GM13977 (cell line): ENCODE measurements at regions of chr2 and their contacts with region 1.

Region 1: GRCh38 chr2:64330281-64331113 is 123.5 kb upstream of the LGALSL start:
- DNase-seq: peak; percentile 23
- CTCF ChIP-seq: peak; percentile 90

Region 2: DNA sequence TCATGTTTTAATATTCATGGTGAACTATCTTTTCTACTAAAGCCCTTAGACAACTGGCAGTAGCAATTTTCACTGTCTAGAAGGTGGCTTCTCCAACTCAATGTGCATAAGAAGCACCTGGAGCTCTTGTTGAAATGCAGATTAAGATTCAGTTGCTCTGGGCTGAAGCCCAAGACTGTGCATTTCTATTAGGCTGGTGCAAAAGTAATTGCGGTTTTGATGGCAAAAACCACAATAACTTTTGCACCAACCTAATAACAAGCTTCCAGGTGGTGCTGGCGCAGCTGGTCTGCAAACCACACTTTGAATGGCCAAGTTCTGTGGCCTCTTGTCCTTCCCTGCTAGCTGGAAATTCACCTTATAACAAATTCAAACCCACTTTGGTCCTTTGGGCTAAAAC is 284.6 kb before region 1 on chr2:
- in situ Hi-C with region 1: loop called (anchors 5 kb)
- DNase-seq: no peak
- CTCF ChIP-seq: no peak

Region 3: GRCh38 chr2:64488050-64488974 is 157.8 kb after region 1 on chr2:
- in situ Hi-C with region 1: loop called (anchors 10 kb)
- DNase-seq: peak; percentile 75
- CTCF ChIP-seq: peak; percentile 87

Region 4: DNA sequence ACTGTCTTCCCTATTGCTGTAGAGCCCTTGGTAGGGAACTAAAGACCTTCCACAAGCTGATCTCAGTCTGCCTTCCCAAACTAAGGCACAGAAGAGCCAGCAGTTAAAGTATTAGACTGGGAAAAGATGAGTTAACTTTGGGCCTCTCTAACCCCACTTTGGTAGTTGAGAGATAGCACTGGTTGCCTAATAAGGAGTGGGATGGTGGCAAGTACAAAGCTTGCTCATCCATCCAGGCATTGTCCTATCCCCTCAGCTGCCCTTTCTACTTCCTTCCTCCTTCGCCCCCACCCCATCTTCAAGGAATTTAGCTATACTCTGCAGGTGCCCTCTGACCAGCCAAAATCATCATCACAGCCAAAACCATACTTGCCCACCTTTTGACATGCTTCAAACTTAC is 171.4 kb after region 1 on chr2:
- in situ Hi-C with region 1: no loop called
- DNase-seq: no peak
- CTCF ChIP-seq: no peak

Region 5: GRCh38 chr2:64873472-64873924 is 543.0 kb after region 1 on chr2:
- in situ Hi-C with region 1: loop called (anchors 25 kb)
- DNase-seq: peak; percentile 74
- CTCF ChIP-seq: peak; percentile 96

Region 6: DNA sequence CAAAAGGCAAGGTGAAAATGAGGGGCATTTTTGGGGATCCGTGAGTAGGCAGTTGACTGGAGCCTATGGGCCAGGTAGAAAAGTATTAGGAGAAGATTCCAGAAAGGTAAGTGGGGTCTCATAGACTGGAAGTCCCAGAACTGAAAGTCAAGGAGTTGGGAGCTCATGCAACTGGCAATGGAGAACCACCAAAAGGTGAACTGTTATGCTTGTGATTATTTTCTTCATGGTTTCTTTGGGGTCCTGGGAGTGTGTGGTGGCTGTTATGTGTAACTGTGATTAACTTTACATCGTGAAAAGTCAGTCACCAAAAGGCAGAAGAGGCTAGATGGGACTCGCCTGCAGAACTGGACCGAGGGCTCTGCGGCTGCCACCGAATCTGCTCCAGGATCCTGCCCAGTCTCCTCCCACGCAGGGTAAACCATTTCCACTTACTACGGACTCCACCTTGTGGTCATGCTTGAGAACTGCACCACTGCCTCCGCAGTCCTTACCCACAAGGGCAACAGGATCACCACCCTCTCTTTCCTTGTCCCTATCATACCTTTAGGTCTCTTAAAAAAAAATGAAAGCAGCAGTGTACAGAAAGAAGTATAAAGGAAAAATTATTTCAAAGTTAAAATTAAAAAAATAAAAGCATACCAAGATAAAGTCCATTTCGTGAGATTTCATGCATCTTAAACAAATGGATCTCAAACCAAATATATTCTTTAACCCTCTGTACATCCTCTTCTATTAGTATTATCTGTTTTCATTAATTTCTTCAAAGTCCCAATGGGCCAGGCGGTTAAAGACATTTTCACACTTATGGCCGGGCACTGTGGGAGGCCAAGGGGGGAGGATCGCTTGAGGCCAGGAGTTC is 710.1 kb after region 1 on chr2:
- in situ Hi-C with region 1: loop called (anchors 25 kb)
- DNase-seq: peak; percentile 64
- CTCF ChIP-seq: peak; percentile 85